ENCODE measurements at regions of chr13 and their contacts with region 1.

Region 1: DNA sequence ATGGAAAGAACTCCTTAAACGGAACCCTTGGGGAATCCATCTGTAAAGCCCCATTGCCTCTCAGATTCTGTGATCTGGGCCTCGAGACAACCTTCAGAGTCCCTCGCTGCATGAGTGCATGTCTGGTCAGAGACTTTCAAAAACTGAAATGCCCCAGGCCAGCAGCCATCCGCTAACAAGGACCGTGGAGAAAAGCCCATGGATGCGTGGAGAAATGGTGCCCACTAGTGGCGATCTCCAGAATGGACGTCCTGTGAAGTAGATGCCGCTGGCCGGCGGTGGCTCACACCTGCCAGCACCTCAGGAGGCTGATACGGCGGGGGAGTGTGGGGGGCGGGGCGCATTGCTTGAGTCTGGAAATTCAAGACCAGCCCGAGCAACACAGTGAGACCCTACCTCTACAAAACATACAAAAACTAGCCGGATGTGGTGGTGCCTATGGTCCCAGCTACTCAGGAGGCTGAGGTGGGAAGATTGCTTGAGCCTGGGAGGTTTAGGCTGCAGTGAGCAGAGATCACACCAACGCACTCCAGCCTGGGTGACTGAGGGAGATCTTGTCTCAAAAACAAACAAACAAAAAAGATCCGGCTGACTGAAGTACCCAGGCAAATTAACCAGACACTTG is 7.9 kb upstream of the CDC16 start:
- DNase-seq: peak in 1 of 2 donors; percentile 89
- H3K4me3 ChIP-seq: no peak overlapping the region
- H3K27ac ChIP-seq: no peak overlapping the region
- H3K4me1 ChIP-seq: peaks cover 6% of the 10 kb centered on the region
- H3K27me3 ChIP-seq: no peaks in the 10 kb centered on the region
- CTCF ChIP-seq: peak; percentile 82 to 98 (median 86)
- POLR2A ChIP-seq: no peak

Region 2: DNA sequence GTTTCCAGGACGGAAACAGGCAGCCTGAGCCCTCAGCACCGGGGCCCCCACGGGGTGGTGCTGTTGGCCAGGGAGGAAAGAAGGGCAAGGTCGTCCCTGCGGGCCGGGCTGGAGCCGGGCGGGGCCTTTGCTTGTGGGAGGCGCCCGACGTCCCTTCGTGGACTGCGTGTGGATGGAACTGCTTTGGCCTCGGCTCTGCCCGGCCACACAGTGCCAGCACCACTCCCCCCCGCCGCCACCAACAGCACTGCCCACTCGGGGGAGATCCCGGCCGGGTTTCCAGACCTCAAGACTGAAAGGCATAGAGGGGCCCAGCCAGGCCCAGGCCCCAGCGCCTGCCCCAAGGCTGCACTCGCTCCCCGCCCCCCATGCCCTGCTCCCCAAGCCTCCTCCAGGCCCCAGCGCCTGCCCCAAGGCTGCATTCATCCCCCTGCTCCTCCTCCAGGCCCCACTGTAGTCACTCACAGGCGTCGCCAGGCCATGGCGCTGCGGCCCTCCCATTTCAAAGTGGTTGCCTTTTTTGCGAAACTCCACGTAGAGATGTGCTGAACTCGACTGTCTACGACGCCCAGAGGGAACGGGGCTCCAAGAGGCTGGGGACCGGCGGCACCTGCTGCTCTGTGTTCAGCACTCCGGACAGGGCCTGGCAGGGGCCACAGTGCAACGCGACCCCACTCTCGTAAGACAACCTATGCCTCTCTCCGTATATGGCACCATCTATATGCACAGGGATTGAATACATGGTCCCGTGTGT is 275.4 kb before region 1 on chr13:
- intact Hi-C with region 1: loop called (anchors 2 kb)
- DNase-seq: no peak
- H3K4me3 ChIP-seq: peak overlapping the region in 1 of 2 donors; percentile 26
- H3K27ac ChIP-seq: peak overlapping the region; percentile 9
- H3K4me1 ChIP-seq: peaks cover 21% of the 10 kb centered on the region
- H3K27me3 ChIP-seq: no peaks in the 10 kb centered on the region
- CTCF ChIP-seq: peak; percentile 83 to 85 (median 85)
- POLR2A ChIP-seq: no peak